Right cardiac atrium (tissue), 5 donors: ENCODE measurements at regions of chr17 and their contacts with region 1.

Region 1: DNA sequence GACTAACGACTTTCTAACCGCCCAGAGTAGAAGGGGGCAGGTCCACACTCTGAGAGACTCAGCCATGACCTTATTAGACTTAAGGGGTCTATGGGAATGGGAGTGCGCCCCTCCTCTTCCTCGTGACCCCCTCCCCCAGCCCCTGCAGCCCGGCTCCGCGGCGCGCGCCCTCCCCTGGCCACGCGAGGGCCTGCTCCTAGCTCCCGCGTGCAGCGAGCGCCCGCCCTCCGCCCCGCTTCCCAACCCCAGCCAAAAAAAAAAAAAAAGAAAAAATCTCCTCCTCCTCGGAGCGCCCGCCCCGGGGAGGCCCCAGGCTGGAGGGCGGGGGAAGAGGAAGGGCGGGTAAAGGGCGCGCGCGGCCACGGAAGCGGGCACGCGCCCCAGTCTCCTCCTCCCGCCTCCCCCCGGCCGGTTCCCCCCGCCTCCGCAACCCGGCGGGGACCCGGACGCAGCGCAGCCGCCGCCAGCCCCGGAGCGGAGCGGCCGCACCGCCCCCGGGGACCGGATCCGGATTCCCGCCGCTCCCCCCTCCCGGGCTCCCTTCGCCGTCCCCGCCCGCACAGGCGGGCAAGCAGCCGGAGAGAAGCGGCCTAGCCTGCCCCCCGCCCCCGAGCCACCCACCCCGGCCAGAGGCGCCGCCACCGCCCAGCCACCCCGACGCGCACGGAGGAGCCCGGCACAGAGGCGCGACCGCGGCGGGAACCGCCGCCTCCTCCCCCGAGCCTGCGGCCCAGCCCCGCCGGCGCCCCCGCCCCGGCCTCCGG is 949 bp downstream of the UBTF start:
- DNase-seq: peak; percentile 89 to 96 (median 95)
- ATAC-seq: peak; percentile 71 to 74
- H3K4me3 ChIP-seq: peak overlapping the region; percentile 98
- H3K27ac ChIP-seq: peak overlapping the region; percentile 99
- H3K4me1 ChIP-seq: peaks cover 11% of the 10 kb centered on the region
- H3K27me3 ChIP-seq: no peaks in the 10 kb centered on the region

Region 2: GRCh38 chr17:44324571-44325275 is 106.2 kb after region 1 on chr17 and contains the start of gene SLC25A39:
- intact Hi-C with region 1: loop called in 3 of 4 experiments (anchors 2 to 5 kb)
- DNase-seq: peak; percentile 93 to 98 (median 98)
- ATAC-seq: peak; percentile 93
- H3K4me3 ChIP-seq: peak within 1 kb of the TSS; percentile 87
- H3K27ac ChIP-seq: peak within 1 kb of the TSS; percentile 70
- H3K4me1 ChIP-seq: no peaks in the 10 kb centered on the region
- H3K27me3 ChIP-seq: no peaks in the 10 kb centered on the region
- total RNA-seq, gene SLC25A39: 56.7 to 69.9 (median 66.4) TPM

Region 3: DNA sequence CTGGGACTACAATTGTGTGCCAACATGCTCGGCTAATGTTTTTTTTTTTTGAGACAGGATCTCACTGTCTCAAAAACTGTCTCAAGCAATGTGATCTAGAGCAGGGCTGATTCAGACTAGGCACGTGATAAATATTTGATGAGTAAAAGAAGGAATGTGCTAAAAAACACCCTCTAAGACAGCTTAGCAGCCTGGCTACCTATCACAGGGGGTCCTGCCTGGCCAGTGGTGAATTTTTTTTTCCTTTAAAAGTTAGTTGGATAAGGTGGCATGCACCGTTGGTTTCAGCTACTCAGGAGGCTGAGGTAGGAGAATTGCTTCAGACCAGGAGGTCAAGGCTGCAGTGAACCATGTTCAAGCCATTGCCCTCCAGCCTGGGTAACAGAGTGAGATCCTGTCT is 299.5 kb after region 1 on chr17:
- intact Hi-C with region 1: loop called in 1 of 4 experiments (anchors 10 kb)
- DNase-seq: no peak
- ATAC-seq: no peak
- H3K4me3 ChIP-seq: no peak overlapping the region
- H3K27ac ChIP-seq: no peak overlapping the region
- H3K4me1 ChIP-seq: no peaks in the 10 kb centered on the region
- H3K27me3 ChIP-seq: no peaks in the 10 kb centered on the region